ENCODE measurements at regions of chr6 and their contacts with region 1.

Region 1: GRCh38 chr6:166999145-166999883 is at the start of gene CEP43:
- DNase-seq: peak; percentile 96 to 97 (median 96)
- ATAC-seq: peak; percentile 98 to 99 (median 99)
- H3K4me3 ChIP-seq: peak within 1 kb of the TSS; percentile 64 to 99 (median 94)
- H3K27ac ChIP-seq: peak within 1 kb of the TSS in 11 of 12 donors; percentile 17 to 84 (median 74)
- H3K4me1 ChIP-seq: peaks cover 0 to 26% (median 14%) of the 10 kb centered on the region in 12 donors
- H3K27me3 ChIP-seq: no peaks in the 10 kb centered on the region
- CTCF ChIP-seq: peak in 6 of 12 donors; percentile 11 to 37 (median 20)
- POLR2A ChIP-seq: peak in 1 of 2 donors; percentile 39
- total RNA-seq, gene CEP43: 6.6 to 15.5 (median 10.7) TPM

Region 2: DNA sequence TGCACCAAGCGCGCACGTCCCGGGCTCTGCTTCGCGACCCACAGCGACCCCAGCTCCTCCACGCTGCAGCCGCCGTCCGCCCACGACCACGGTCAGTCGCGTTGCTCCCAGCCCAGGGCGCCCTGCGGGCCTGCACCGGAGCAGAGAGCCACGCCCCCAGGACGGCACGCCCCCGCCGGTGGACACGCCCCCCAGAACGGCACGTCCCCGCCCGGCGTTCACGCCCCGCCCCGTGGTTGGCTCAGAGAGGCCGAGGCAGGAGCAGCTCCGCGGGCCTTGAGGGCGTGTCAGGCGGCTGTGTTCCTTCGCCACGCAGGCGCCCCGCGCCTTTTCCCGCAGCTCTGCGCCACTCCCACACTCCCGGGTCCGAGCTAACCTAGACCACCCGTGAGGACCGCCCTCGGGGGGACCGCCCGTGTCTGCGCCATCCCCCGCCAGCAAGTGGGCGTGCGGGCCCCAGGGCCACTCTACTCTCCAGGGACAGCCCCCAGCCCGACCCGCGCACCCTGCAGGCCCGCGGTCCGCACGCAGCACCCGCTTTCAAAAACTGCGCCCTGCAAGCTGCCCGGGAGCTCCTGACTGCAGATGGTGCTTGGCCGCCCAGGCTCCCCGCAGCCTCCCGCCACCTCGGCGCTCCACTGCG is 42.7 kb before region 1 on chr6 and contains the start of gene RNASET2:
- intact Hi-C with region 1: loop called in 3 of 10 experiments (anchors 2 to 5 kb)
- DNase-seq: peak; percentile 97 to 100 (median 98)
- ATAC-seq: peak; percentile 98 to 99 (median 98)
- H3K4me3 ChIP-seq: peak within 1 kb of the TSS; percentile 61 to 98 (median 88)
- H3K27ac ChIP-seq: peak within 1 kb of the TSS; percentile 73 to 98 (median 84)
- H3K4me1 ChIP-seq: peaks cover 0 to 63% (median 12%) of the 10 kb centered on the region in 12 donors
- H3K27me3 ChIP-seq: no peaks in the 10 kb centered on the region
- CTCF ChIP-seq: peak in 1 of 12 donors; percentile 17
- POLR2A ChIP-seq: peak in 1 of 2 donors; percentile 83
- total RNA-seq, gene RNASET2: 7.9 to 76.0 (median 13.5) TPM

Region 3: DNA sequence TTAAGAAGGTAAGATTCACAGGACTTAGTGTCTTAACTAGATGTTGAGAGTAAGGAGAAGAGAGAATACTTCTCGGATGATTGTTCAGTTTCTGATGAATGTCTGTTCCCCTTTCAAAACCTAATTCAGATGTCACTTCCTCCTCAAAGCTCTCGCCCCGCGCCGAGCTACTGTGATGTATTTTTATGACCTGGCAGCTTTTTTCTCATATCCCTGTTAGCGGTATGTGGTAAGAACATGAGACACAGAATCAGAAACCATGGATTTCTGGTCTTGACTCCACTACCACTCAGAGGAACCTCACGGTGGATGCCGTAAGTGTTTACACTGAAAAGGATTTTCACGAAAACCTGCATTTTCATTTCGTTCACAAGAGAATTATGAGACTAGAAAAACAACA is 48.2 kb after region 1 on chr6:
- intact Hi-C with region 1: no loop called
- DNase-seq: peak in 2 of 5 donors; percentile 41 to 62
- ATAC-seq: peak in 1 of 4 donors; percentile 42
- H3K4me3 ChIP-seq: peak overlapping the region in 1 of 12 donors; percentile 10
- H3K27ac ChIP-seq: peak overlapping the region in 1 of 12 donors; percentile 34
- H3K4me1 ChIP-seq: peaks cover 0 to 8% (median 0%) of the 10 kb centered on the region in 12 donors
- H3K27me3 ChIP-seq: no peaks in the 10 kb centered on the region
- CTCF ChIP-seq: no peak
- POLR2A ChIP-seq: no peak

Region 4: GRCh38 chr6:167119670-167120381 is 120.5 kb after region 1 on chr6:
- intact Hi-C with region 1: no loop called
- DNase-seq: no peak
- ATAC-seq: no peak
- H3K4me3 ChIP-seq: no peak overlapping the region
- H3K27ac ChIP-seq: peak overlapping the region in 1 of 12 donors; percentile 0
- H3K4me1 ChIP-seq: peaks cover 0 to 12% (median 0%) of the 10 kb centered on the region in 12 donors
- H3K27me3 ChIP-seq: peaks cover 0 to 43% (median 4%) of the 10 kb centered on the region in 9 donors
- CTCF ChIP-seq: no peak
- POLR2A ChIP-seq: no peak

Region 5: GRCh38 chr6:167141667-167142432 is 142.5 kb after region 1 on chr6:
- intact Hi-C with region 1: loop called (anchors 1 to 10 kb)
- DNase-seq: peak in 4 of 5 donors; percentile 24 to 62 (median 48)
- ATAC-seq: peak; percentile 75 to 92 (median 87)
- H3K4me3 ChIP-seq: no peak overlapping the region
- H3K27ac ChIP-seq: no peak overlapping the region
- H3K4me1 ChIP-seq: no peaks in the 10 kb centered on the region
- H3K27me3 ChIP-seq: peaks cover 0 to 49% (median 11%) of the 10 kb centered on the region in 9 donors
- CTCF ChIP-seq: peak; percentile 56 to 80 (median 70)
- POLR2A ChIP-seq: no peak

Region 6: DNA sequence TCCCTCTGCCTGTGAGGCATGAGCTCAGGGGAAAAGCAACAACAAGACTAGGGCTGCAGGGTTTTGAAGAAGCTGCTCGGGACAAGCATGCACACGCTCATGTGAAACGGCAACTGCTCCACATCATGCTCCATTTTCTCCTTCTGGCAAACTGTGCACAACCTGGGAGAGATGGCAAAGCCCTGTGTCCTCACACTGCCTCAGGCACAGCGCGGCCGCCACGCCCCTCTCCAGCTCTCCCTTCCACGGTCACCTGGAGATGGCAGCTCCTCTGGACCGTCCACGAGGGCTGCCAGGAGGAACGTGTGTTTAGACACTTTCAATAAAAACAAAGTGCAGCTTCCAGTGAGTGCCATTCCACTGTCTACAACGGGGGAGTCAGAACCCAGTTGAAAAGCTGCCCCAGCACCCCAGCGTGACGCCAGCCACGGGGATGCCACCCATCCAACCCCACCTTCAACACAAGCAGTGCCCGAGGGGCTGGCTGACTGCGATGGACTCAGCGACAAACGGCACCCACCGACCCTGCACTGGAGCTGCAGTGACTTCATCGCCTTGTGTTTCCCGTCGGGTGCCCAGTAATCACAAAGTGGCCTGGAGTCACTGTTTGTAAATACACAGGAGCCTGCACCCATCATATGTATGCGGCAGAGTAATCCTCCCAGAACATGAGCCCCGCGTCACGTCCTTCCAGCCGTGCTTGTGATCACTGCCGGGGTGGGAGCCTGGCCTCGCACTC is 1457.8 kb after region 1 on chr6:
- intact Hi-C with region 1: no loop called
- DNase-seq: no peak
- ATAC-seq: no peak
- H3K4me3 ChIP-seq: no peak overlapping the region
- H3K27ac ChIP-seq: no peak overlapping the region
- H3K4me1 ChIP-seq: peaks cover 0 to 31% (median 4%) of the 10 kb centered on the region in 12 donors
- H3K27me3 ChIP-seq: peaks cover 0 to 13% (median 0%) of the 10 kb centered on the region in 9 donors
- CTCF ChIP-seq: no peak
- POLR2A ChIP-seq: no peak

Measured in heart left ventricle (tissue), 16 donors.